Activated CD4-positive, alpha-beta T cell treated with anti-CD3 and anti-CD28 coated beads for 36 hours (primary cell): ENCODE measurements at regions of chr1 and their contacts with region 1.

Region 1: GRCh38 chr1:222634180-222635013 is 16.5 kb downstream of the MIA3 start:
- DNase-seq: peak; percentile 76
- ATAC-seq: peak; percentile 86
- H3K4me3 Mint-ChIP-seq: no peak overlapping the region
- H3K27ac Mint-ChIP-seq: no peak overlapping the region
- H3K4me1 Mint-ChIP-seq: peaks cover 2% of the 10 kb centered on the region
- H3K27me3 Mint-ChIP-seq: no peaks in the 10 kb centered on the region

Region 2: DNA sequence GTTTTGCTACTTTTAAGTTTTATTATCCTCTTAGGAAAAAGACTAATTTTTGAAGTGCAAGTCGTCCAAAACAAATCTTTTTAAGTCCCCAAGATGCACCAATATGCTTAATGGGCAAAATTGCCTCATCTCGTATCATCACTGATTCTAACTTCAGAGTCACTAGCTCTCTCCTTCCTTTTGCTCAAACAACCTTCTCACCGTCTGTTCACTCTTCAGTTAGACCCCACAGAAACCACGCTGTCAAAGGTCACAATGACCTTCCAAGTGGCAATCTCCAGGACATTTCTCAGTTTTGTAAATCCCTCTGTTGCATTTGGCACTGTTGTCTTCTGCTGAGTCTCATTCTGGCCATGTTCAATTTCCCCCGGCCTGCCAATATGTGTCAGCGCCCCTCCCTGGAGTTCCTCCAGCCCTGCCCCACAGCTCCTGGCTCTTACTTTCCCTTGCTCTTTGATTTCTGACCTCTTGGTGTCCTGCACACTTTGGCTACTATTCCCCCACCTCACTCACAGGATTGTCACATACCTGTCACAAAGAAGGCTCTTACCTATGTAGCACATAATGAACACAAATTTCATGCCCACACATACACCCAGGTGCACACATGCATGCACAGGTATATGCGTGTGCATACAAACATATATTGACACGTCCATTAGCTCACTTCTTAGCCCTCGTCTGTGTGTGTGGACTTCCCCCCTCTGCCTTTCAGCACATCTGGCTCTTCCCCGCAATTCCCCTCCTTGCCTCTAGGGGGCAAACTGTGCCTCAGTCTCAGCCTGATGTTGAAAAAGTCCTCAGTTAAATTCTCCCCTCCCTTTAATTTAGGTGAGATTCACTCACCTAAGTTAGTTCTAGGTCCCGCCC is 538.6 kb before region 1 on chr1:
- CTCF ChIA-PET with region 1: no interaction called
- POLR2A ChIA-PET with region 1: no interaction called
- intact Hi-C with region 1: loop called in 1 of 2 experiments (anchors 10 kb)
- DNase-seq: peak; percentile 75
- ATAC-seq: peak; percentile 78
- H3K4me3 Mint-ChIP-seq: no peak overlapping the region
- H3K27ac Mint-ChIP-seq: no peak overlapping the region
- H3K4me1 Mint-ChIP-seq: no peaks in the 10 kb centered on the region
- H3K27me3 Mint-ChIP-seq: no peaks in the 10 kb centered on the region

Region 3: DNA sequence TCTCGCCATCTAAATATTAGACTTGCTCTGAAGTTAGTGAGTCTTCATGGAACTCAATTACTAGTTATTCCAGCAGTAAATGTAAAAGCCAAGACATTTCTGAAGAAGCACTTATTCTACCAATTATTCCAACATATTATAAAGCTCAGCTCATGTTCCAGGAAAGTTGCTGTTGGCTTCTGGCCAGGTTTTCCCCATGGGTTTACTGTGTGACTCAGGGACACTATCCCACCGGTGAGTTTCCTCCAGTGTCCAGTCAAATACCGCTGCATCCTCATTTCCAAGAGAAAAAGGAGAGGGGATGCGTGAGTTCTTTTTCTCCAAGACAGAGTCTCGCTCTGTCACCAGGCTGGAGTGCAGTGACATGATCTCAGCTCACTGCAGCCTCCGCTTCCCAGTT is 77.2 kb before region 1 on chr1:
- CTCF ChIA-PET with region 1: interaction called, 11 read pairs
- POLR2A ChIA-PET with region 1: no interaction called
- intact Hi-C with region 1: no loop called
- DNase-seq: no peak
- ATAC-seq: no peak
- H3K4me3 Mint-ChIP-seq: no peak overlapping the region
- H3K27ac Mint-ChIP-seq: no peak overlapping the region
- H3K4me1 Mint-ChIP-seq: no peaks in the 10 kb centered on the region
- H3K27me3 Mint-ChIP-seq: no peaks in the 10 kb centered on the region

Region 4: GRCh38 chr1:222582099-222582774 is 52.2 kb before region 1 on chr1:
- CTCF ChIA-PET with region 1: interaction called, 9 read pairs
- POLR2A ChIA-PET with region 1: no interaction called
- intact Hi-C with region 1: loop called in 1 of 2 experiments (anchors 5 kb)
- DNase-seq: no peak
- ATAC-seq: peak; percentile 26
- H3K4me3 Mint-ChIP-seq: no peak overlapping the region
- H3K27ac Mint-ChIP-seq: no peak overlapping the region
- H3K4me1 Mint-ChIP-seq: peaks cover 29% of the 10 kb centered on the region
- H3K27me3 Mint-ChIP-seq: no peaks in the 10 kb centered on the region

Region 5: GRCh38 chr1:222589462-222590302 is 44.7 kb before region 1 on chr1 and contains the start of gene TAF1A:
- CTCF ChIA-PET with region 1: interaction called, 15 read pairs
- POLR2A ChIA-PET with region 1: interaction called, 6 read pairs
- intact Hi-C with region 1: loop called in 1 of 2 experiments (anchors 5 kb)
- DNase-seq: peak; percentile 93
- ATAC-seq: peak; percentile 99
- H3K4me3 Mint-ChIP-seq: peak within 1 kb of the TSS; percentile 99
- H3K27ac Mint-ChIP-seq: peak within 1 kb of the TSS; percentile 99
- H3K4me1 Mint-ChIP-seq: peaks cover 36% of the 10 kb centered on the region
- H3K27me3 Mint-ChIP-seq: no peaks in the 10 kb centered on the region
- total RNA-seq, gene TAF1A: 18.5 to 21.1 TPM

Region 6: DNA sequence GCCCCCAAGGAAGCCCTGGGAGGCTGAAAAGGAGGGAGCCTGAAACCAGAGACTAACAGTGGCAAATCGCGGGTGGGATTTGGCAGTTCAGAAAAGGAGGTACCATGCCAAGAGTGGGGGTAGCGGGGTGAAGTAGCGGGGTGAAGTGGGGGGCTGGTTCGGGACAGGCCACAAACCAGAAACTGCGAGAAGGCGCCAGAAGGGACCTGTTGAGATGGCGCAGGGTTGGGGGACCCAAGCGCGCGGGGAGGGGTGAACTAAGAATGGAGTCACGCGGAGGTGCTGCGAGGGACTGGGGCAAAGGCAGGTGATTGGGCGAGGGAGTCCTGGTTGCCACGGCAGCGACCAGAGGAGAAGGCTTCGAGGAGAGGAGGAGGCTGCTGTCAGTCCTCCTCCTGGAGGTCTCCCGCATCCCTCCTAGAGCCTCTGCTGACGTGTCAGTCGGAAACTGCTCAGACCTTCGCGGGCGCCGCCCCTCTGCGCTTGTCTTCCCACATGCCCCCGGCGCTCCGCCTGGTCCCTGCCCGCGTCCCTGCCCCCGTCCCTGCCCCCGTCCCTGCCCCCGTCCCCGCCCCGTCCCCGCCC is 16.9 kb before region 1 on chr1:
- CTCF ChIA-PET with region 1: interaction called, 39 read pairs
- POLR2A ChIA-PET with region 1: no interaction called
- intact Hi-C with region 1: loop called in 1 of 2 experiments (anchors 1 kb)
- DNase-seq: peak; percentile 94
- ATAC-seq: peak; percentile 95
- H3K4me3 Mint-ChIP-seq: peak overlapping the region; percentile 83
- H3K27ac Mint-ChIP-seq: peak overlapping the region; percentile 88
- H3K4me1 Mint-ChIP-seq: peaks cover 31% of the 10 kb centered on the region
- H3K27me3 Mint-ChIP-seq: peaks cover 11% of the 10 kb centered on the region

Region 7: GRCh38 chr1:222622765-222623164 is 11.6 kb before region 1 on chr1:
- CTCF ChIA-PET with region 1: interaction called, 39 read pairs
- POLR2A ChIA-PET with region 1: no interaction called
- intact Hi-C with region 1: loop called in 1 of 2 experiments (anchors 1 kb)
- DNase-seq: no peak
- ATAC-seq: no peak
- H3K4me3 Mint-ChIP-seq: no peak overlapping the region
- H3K27ac Mint-ChIP-seq: no peak overlapping the region
- H3K4me1 Mint-ChIP-seq: peaks cover 26% of the 10 kb centered on the region
- H3K27me3 Mint-ChIP-seq: no peaks in the 10 kb centered on the region